ENCODE measurements at regions of chr10 and their contacts with region 1.

Region 1: GRCh38 chr10:120948889-120949608 is 97.9 kb downstream of the WDR11 start:
- DNase-seq: peak; percentile 15
- H3K4me3 ChIP-seq: peak overlapping the region; percentile 55
- H3K27ac ChIP-seq: no peak overlapping the region
- H3K27me3 ChIP-seq: peaks cover 16% of the 10 kb centered on the region
- CTCF ChIP-seq: peak; percentile 75

Region 2: DNA sequence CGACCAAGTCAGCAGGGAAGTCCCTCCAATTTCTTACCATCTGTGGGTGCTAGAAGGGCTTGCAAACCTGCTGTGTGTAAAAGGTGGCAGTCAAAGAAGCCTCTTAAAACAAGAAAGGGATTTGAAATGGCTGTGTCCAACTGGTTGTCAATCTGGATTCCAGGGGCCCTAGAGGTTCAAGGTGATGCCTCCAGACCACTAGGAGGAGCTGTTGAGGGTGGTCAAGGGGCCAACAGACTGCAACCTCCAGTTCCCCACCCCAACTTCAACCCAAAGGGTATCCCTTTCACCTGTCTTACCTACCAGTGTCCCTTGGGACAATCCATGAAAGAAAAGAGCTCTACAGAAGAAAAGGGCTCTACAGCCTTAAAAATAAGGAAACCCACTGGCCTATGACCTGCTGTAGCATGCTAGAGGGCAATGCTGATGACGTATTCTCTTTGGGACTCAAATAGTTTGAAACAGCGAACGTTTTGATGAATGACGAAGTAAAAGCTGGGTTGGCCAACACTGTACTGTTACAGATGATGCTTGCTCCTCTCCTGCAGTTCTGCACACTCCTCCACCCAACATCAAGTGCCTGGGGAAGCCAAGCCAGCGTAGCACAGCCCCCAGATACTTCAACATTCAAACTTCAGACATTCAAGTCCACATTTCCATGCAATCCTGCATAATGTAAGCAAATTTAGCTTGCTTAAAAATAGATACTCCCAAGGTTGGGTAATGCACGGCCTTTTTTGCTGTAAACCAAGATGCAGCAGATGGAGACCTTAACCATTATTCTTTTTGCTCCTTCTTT is 143.8 kb before region 1 on chr10:
- CTCF ChIA-PET with region 1: no interaction called
- POLR2A ChIA-PET with region 1: no interaction called
- DNase-seq: no peak
- H3K4me3 ChIP-seq: no peak overlapping the region
- H3K27ac ChIP-seq: no peak overlapping the region
- H3K27me3 ChIP-seq: no peaks in the 10 kb centered on the region
- CTCF ChIP-seq: no peak

Region 3: DNA sequence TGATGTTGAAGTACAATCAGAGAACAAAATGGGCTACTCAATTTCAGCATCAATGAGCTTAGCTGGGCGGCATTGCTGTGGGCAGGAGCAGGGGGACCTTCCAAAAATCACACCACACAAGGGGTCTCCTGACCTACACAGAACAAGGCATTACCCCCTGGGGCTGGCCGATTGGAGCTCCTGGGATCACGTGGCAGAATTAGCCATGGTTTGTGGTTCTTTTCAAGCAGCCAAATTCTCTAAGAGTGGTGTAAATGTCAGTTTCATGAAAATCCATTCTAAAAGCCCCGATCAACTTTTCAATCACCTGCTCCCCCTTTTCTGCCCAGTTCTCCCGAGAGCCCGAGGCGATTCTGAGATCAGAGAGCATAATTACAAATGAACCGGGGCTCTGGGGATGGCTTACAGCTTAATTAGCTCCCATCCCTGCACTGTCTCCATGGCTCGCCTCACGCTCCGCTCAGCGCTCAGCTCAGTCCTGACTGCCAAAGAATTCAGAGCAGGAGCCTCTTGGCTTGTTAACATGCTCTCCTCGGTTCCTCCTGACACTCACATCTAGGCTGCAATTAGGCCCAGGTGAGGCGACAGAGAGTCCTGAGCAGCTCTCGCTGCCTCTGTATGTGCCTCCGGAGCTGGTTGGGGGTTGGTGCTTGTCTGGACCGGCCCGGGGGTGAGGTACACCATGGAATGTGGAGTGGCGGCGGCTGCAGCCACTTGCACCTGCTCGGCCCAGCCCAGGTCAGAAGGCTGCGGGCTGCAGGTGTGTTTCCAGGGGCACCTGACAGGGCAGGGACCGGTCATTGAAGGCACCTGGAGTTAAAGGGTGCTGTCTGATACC is 13.9 kb after region 1 on chr10:
- CTCF ChIA-PET with region 1: interaction called, 11 read pairs
- POLR2A ChIA-PET with region 1: no interaction called
- DNase-seq: no peak
- H3K4me3 ChIP-seq: no peak overlapping the region
- H3K27ac ChIP-seq: no peak overlapping the region
- H3K27me3 ChIP-seq: no peaks in the 10 kb centered on the region
- CTCF ChIP-seq: no peak

Region 4: DNA sequence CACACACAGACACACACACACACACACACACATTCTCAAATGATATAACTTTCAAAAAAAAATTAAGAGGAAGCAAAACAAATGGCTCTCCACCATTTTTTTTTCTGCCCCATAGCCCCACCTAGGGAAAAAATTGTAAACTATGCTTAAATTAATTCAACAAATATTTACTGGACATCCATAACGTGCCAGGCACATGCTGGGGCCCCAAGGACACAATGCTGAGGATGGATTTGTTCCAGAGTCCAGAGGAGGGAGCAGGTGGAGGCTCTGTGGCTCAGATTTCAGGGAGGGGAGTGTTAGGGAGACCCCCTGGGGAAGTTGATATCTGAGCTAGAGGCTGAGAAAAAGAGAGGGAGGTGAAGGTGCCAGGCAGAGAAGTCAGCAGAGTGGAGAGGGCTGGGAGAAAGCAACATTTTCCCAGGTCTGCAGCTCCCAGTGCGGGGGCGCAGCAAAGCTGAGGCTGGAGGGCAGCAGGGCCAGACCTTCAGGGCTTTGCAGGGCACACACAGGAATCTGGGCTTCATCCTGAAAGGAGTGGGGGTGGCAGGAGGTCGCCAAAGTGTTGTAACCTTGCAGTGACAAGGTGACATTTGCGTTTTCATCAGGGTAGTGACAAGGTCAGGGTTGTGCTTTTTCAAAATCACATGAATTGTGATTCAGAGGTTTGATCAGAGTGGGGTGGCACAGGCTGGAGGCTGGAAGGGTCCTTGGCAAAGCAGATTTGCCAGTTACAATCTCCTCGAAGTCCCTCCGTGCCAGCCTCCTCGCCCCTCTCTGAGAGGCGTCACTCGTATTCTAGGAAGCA is 163.7 kb after region 1 on chr10:
- CTCF ChIA-PET with region 1: no interaction called
- POLR2A ChIA-PET with region 1: no interaction called
- DNase-seq: no peak
- H3K4me3 ChIP-seq: no peak overlapping the region
- H3K27ac ChIP-seq: no peak overlapping the region
- H3K27me3 ChIP-seq: no peaks in the 10 kb centered on the region
- CTCF ChIP-seq: no peak

Region 5: GRCh38 chr10:121732656-121733445 is 783.8 kb after region 1 on chr10:
- CTCF ChIA-PET with region 1: interaction called, 13 read pairs
- POLR2A ChIA-PET with region 1: no interaction called
- DNase-seq: no peak
- H3K4me3 ChIP-seq: no peak overlapping the region
- H3K27ac ChIP-seq: no peak overlapping the region
- H3K27me3 ChIP-seq: peaks cover 7% of the 10 kb centered on the region
- CTCF ChIP-seq: no peak

Region 6: GRCh38 chr10:121880895-121881294 is 931.8 kb after region 1 on chr10:
- CTCF ChIA-PET with region 1: interaction called, 60 read pairs
- POLR2A ChIA-PET with region 1: no interaction called
- DNase-seq: no peak
- H3K4me3 ChIP-seq: no peak overlapping the region
- H3K27ac ChIP-seq: no peak overlapping the region
- H3K27me3 ChIP-seq: no peaks in the 10 kb centered on the region
- CTCF ChIP-seq: no peak

Region 7: GRCh38 chr10:121886997-121887622 is 938.1 kb after region 1 on chr10:
- CTCF ChIA-PET with region 1: interaction called, 60 read pairs
- POLR2A ChIA-PET with region 1: interaction called, 3 read pairs
- DNase-seq: peak; percentile 43
- H3K4me3 ChIP-seq: no peak overlapping the region
- H3K27ac ChIP-seq: no peak overlapping the region
- H3K27me3 ChIP-seq: no peaks in the 10 kb centered on the region
- CTCF ChIP-seq: peak; percentile 95

Region 8: GRCh38 chr10:121900443-121901174 is 951.6 kb after region 1 on chr10:
- CTCF ChIA-PET with region 1: interaction called, 50 read pairs
- POLR2A ChIA-PET with region 1: no interaction called
- DNase-seq: peak; percentile 42
- H3K4me3 ChIP-seq: no peak overlapping the region
- H3K27ac ChIP-seq: no peak overlapping the region
- H3K27me3 ChIP-seq: no peaks in the 10 kb centered on the region
- CTCF ChIP-seq: peak; percentile 66

Measured in AG04450 (cell line).